GM12878 (cell line): ENCODE measurements at regions of chr6 and their contacts with region 1.

Region 1: DNA sequence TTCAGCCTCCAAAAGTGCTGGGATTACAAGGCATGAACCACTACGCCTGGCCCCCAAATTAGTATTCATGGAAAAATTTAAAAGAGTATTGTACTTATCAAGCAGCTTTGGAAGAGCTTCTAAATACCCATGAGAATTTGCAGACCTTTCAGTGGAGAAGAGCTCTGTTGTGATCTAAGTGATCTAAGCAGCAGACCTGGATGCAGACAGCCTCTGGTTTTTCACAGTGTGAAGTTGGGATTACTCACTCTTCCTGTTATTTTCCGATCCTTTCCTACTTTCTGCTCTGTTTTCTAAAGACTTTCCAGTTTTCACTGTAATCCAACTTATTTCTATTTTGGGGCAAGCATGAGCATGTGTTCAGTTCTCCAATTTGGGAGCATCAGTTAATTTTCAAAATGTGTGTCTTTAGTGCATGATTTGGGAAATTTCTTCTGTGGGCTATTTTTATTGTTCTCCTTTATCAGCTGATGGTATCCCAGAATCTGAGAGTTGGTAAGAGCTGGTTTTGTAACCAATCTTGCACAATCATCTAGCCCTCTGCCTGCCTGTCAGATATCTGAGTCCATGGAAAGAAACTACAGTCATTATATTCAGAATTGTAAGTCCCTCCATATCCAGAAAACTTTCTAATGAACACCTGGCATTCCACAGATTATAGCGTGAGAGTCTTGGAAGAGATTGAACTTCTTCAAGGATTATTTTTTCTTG is 207.7 kb upstream of the DTNBP1 start:
- DNase-seq: no peak
- ATAC-seq: no peak
- H3K4me3 ChIP-seq: no peak overlapping the region
- H3K27ac ChIP-seq: no peak overlapping the region
- H3K4me1 ChIP-seq: no peaks in the 10 kb centered on the region
- H3K27me3 ChIP-seq: no peaks in the 10 kb centered on the region
- CTCF ChIP-seq: no peak
- EP300 ChIP-seq: no peak
- POLR2A ChIP-seq: no peak
- RAD21 ChIP-seq: no peak

Region 2: GRCh38 chr6:15781890-15782289 is 88.6 kb before region 1 on chr6:
- CTCF ChIA-PET with region 1: no interaction called
- POLR2A ChIA-PET with region 1: interaction called, 15 read pairs
- RAD21 ChIA-PET with region 1: interaction called, 55 read pairs
- SMC1A ChIA-PET with region 1: interaction called, 36 read pairs
- in situ Hi-C with region 1: no loop called
- intact Hi-C with region 1: loop called (anchors 5 kb)
- DNase-seq: no peak
- ATAC-seq: no peak
- H3K4me3 ChIP-seq: no peak overlapping the region
- H3K27ac ChIP-seq: no peak overlapping the region
- H3K4me1 ChIP-seq: no peaks in the 10 kb centered on the region
- H3K27me3 ChIP-seq: no peaks in the 10 kb centered on the region
- CTCF ChIP-seq: no peak
- EP300 ChIP-seq: no peak
- POLR2A ChIP-seq: no peak
- RAD21 ChIP-seq: no peak

Region 3: DNA sequence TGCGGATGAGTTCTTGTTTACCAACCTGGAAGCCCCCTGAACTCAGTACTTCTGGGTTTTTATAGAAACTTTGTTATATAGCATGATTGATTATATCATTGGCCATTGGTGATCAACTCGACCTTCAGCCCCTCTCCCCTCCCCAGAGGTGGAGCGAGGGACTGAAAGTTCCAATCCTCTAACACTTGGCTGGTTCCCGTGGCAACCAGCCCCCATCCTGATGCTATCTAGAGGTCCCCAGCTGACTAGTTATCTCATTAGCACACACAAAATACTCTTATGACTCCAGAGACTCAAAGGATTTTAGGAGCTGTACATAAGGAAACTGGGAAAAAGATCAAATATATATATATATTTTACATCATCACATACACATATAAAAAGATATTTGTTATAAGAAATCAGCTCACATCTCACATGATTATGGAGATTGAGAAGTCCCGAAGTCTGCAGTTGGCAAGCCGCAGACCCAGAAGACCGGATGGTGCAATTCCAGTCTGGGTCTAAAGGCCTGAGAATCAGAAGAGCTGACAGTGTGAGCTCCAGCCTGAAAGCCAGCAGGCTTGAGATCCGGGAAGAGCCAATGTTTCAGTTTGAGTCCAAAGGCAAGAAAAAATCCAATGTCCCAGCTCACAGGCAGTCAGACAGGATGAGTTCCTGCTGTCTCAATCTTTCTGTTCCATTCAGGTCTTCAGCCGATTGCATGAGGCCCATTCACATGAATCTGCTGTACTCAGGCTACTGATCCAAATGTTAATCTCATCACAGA is 28.4 kb before region 1 on chr6:
- CTCF ChIA-PET with region 1: interaction called, 7 read pairs
- POLR2A ChIA-PET with region 1: interaction called, 8 read pairs
- RAD21 ChIA-PET with region 1: interaction called, 4 read pairs
- SMC1A ChIA-PET with region 1: interaction called, 12 read pairs
- in situ Hi-C with region 1: no loop called
- intact Hi-C with region 1: no loop called
- DNase-seq: no peak
- ATAC-seq: no peak
- H3K4me3 ChIP-seq: no peak overlapping the region
- H3K27ac ChIP-seq: no peak overlapping the region
- H3K4me1 ChIP-seq: peaks cover 5% of the 10 kb centered on the region; the same call in 1 of the 2 replicates
- H3K27me3 ChIP-seq: no peaks in the 10 kb centered on the region
- CTCF ChIP-seq: no peak
- EP300 ChIP-seq: no peak
- POLR2A ChIP-seq: no peak
- RAD21 ChIP-seq: no peak

Region 4: GRCh38 chr6:15854826-15855710 is 15.4 kb before region 1 on chr6:
- CTCF ChIA-PET with region 1: interaction called, 5 read pairs
- POLR2A ChIA-PET with region 1: interaction called, 3 read pairs
- RAD21 ChIA-PET with region 1: interaction called, 8 read pairs
- SMC1A ChIA-PET with region 1: interaction called, 29 read pairs
- in situ Hi-C with region 1: no loop called
- intact Hi-C with region 1: no loop called
- DNase-seq: no peak
- ATAC-seq: no peak
- H3K4me3 ChIP-seq: no peak overlapping the region
- H3K27ac ChIP-seq: no peak overlapping the region
- H3K4me1 ChIP-seq: no peaks in the 10 kb centered on the region
- H3K27me3 ChIP-seq: no peaks in the 10 kb centered on the region; a peak in 1 of 4 replicates
- CTCF ChIP-seq: no peak
- EP300 ChIP-seq: no peak
- POLR2A ChIP-seq: no peak
- RAD21 ChIP-seq: no peak

Region 5: DNA sequence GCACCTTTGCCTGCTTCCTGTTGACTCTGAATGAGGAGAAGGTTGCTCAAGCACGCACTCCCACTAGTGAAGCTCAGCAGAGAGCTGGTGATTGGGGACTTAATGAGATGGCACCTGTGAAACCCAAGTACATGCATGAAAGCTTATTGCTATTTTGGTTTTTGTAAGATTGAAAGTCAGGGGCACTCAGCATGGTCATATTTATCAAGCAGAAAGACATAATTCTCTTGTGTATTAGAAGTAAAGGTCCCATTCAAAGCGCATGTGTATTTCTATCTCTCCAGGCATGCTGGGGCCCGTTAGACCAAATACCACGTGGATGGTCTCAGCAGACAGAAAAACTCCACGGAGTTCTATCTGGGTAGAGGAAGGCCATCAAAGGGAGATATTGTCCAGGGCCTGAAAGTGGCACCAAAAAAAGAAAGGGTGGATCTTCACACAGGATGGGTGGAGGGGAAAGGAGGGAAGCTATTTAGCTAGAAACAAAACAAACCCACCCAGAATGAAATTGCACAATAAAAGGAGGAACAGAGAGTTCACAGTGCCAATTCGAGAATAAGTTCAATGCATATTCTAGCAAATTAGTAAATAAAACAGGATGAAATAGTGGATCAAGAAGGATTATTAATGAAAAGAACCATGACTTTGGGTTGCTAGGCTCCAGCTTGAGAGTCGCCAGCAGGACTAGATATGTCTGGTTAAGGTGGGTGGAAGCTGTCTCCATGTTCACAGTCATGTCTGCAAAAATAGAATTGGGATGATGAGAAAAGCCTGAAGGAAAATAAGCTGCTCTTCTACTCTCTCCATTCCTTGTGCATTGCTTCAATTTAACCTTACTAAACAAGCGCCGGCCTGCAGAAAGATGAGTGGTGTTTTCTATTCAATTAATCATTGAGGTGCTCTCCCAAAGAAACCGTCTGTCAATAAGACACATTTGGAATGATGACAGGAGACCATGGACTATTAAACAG is 17.3 kb after region 1 on chr6:
- CTCF ChIA-PET with region 1: interaction called, 7 read pairs
- POLR2A ChIA-PET with region 1: interaction called, 9 read pairs
- RAD21 ChIA-PET with region 1: interaction called, 16 read pairs
- SMC1A ChIA-PET with region 1: interaction called, 13 read pairs
- in situ Hi-C with region 1: no loop called
- intact Hi-C with region 1: no loop called
- DNase-seq: no peak
- ATAC-seq: peak; percentile 90
- H3K4me3 ChIP-seq: no peak overlapping the region
- H3K27ac ChIP-seq: no peak overlapping the region
- H3K4me1 ChIP-seq: peaks cover 10% of the 10 kb centered on the region; the same call in 1 of the 2 replicates
- H3K27me3 ChIP-seq: no peaks in the 10 kb centered on the region
- CTCF ChIP-seq: no peak
- EP300 ChIP-seq: no peak; a peak in 1 of 4 replicates
- POLR2A ChIP-seq: no peak
- RAD21 ChIP-seq: no peak

Region 6: DNA sequence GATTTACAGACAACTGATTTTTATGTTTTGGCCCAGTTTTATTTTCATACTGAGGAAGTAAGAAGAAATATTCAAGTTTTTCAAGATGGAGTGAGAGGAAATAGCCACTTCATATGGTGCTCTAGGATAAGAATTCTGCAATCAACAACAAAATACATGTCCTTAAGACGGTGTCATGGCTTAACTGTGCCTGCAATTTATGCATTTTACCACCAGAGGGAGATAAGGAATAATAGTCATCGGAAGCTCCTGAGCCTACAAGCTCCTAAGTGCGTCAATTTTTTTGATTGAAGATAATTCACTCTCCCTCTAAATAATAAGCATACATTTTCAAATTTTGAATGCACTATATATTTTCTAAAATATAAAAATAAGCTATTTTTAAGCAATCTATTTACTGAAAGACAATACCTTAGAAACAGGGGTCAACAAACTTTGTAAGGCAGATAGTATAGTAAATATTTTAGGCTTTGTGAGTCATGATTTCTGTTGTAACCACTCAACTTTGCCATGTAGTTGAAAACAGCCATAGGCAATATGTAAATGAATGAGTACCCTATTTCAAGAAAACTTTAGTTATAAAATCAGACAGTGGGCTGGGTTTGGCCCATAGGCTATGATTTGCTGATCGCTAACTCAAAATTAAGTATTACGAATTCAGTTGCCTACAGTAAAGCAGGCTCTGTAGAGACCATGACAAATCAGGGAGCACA is 23.2 kb after region 1 on chr6:
- CTCF ChIA-PET with region 1: interaction called, 4 read pairs
- POLR2A ChIA-PET with region 1: interaction called, 9 read pairs
- RAD21 ChIA-PET with region 1: interaction called, 15 read pairs
- SMC1A ChIA-PET with region 1: interaction called, 183 read pairs
- in situ Hi-C with region 1: no loop called
- intact Hi-C with region 1: no loop called
- DNase-seq: no peak
- ATAC-seq: 0 out of 3 replicates have a peak, but pooled peaks have one; percentile 22
- H3K4me3 ChIP-seq: no peak overlapping the region
- H3K27ac ChIP-seq: no peak overlapping the region
- H3K4me1 ChIP-seq: peaks cover 14% of the 10 kb centered on the region
- H3K27me3 ChIP-seq: no peaks in the 10 kb centered on the region
- CTCF ChIP-seq: peak in 2 of 3 experiments; percentile 37 to 59; a peak in 3 of 6 replicates
- EP300 ChIP-seq: no peak
- POLR2A ChIP-seq: no peak
- RAD21 ChIP-seq: peak; percentile 41